ENCODE measurements at regions of chr14 and their contacts with region 1.

Region 1: DNA sequence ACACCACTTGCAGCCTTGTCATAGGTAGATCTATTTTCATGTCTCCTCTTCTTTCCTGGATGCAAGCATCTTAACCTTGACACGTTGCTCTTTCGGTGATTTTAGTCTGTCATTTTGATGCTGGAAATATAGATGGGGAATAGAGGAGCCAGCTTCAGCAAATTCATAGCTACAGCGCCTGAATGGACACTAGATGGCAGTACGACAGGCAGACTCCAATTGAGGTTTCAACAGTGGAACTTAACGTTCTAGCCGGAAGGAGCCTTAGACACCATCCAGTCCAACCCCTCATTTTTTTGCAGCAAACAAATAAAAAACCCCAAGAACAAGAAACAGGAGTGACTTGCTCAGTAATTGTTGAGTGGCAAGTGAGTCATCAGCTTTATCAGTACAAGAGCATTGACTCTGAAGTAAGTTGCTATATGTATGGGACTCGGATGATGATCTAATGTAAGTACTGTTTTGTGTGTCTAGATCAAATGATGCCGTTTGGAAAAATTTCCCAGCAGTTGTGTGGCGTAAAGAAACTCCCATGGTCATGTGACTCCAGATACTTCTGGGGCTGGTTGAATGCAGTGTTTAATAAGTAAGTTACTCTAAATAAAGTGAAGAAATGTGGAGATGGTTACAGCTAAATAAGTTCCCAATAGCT is 9.0 kb downstream of the DMAC2L start:
- DNase-seq: peak; percentile 83
- ATAC-seq: peak; percentile 98
- H3K4me3 ChIP-seq: peak overlapping the region; percentile 10 to 16
- H3K27ac ChIP-seq: peak overlapping the region; percentile 21; the same call in 1 of the 2 replicates
- H3K4me1 ChIP-seq: peaks cover 5 to 10% of the 10 kb centered on the region in 2 experiments
- H3K27me3 ChIP-seq: no peaks in the 10 kb centered on the region
- CTCF ChIP-seq: peak; percentile 83 to 96 (median 95)
- POLR2A ChIP-seq: no peak
- RAD21 ChIP-seq: peak; percentile 74

Region 2: DNA sequence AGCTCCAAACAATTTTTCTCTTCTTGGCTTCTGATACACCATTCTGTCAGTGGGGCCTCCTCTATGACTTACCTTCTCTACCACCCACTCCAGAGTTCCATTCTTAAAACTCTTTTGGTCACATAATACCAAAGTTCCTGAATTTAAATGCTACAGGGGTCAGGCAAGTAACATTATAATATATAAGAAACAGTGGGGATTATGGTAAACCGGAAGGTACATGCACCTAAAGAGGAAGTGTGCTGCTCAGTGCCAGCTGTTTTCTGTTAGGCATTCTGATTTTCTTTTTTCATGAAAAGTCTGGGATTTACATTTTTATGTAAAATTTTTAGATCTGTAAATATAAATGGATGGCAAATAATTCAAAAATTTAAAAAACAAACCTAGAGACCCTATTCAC is 129.6 kb before region 1 on chr14:
- CTCF ChIA-PET with region 1: no interaction called
- POLR2A ChIA-PET with region 1: no interaction called
- RAD21 ChIA-PET with region 1: no interaction called
- intact Hi-C with region 1: no loop called
- DNase-seq: no peak
- ATAC-seq: no peak
- H3K4me3 ChIP-seq: no peak overlapping the region
- H3K27ac ChIP-seq: no peak overlapping the region
- H3K4me1 ChIP-seq: no peaks in the 10 kb centered on the region
- H3K27me3 ChIP-seq: no peaks in the 10 kb centered on the region
- CTCF ChIP-seq: no peak
- POLR2A ChIP-seq: no peak
- RAD21 ChIP-seq: no peak

Region 3: GRCh38 chr14:50335389-50335788 is 14.3 kb after region 1 on chr14:
- CTCF ChIA-PET with region 1: interaction called, 18 read pairs
- POLR2A ChIA-PET with region 1: no interaction called
- RAD21 ChIA-PET with region 1: no interaction called
- intact Hi-C with region 1: no loop called
- DNase-seq: no peak
- ATAC-seq: peak; percentile 36; the same call in 1 of the 2 replicates
- H3K4me3 ChIP-seq: no peak overlapping the region
- H3K27ac ChIP-seq: no peak overlapping the region
- H3K4me1 ChIP-seq: no peaks in the 10 kb centered on the region
- H3K27me3 ChIP-seq: no peaks in the 10 kb centered on the region
- CTCF ChIP-seq: no peak
- POLR2A ChIP-seq: no peak
- RAD21 ChIP-seq: no peak

Region 4: GRCh38 chr14:50396631-50397390 is 75.7 kb after region 1 on chr14 and contains the start of gene CDKL1:
- CTCF ChIA-PET with region 1: interaction called, 4 read pairs
- POLR2A ChIA-PET with region 1: no interaction called
- RAD21 ChIA-PET with region 1: interaction called in 1 of 2 experiments, 4 read pairs
- intact Hi-C with region 1: loop called (anchors 5 kb)
- DNase-seq: no peak
- ATAC-seq: peak; percentile 84
- H3K4me3 ChIP-seq: peak within 1 kb of the TSS; percentile 54 to 67
- H3K27ac ChIP-seq: peak within 1 kb of the TSS; percentile 65
- H3K4me1 ChIP-seq: peaks cover 10 to 26% of the 10 kb centered on the region in 2 experiments
- H3K27me3 ChIP-seq: no peaks in the 10 kb centered on the region
- CTCF ChIP-seq: no peak
- POLR2A ChIP-seq: peak; percentile 33
- RAD21 ChIP-seq: no peak
- total RNA-seq, gene CDKL1: 7.1 TPM

Region 5: GRCh38 chr14:50532502-50533240 is 211.5 kb after region 1 on chr14 and contains the start of gene MAP4K5:
- CTCF ChIA-PET with region 1: interaction called, 9 read pairs
- POLR2A ChIA-PET with region 1: interaction called, 3 read pairs
- RAD21 ChIA-PET with region 1: interaction called, 3 to 4 read pairs
- intact Hi-C with region 1: loop called (anchors 1 kb)
- DNase-seq: peak; percentile 76
- ATAC-seq: peak; percentile 94
- H3K4me3 ChIP-seq: peak within 1 kb of the TSS; percentile 76 to 81
- H3K27ac ChIP-seq: peak within 1 kb of the TSS; percentile 88
- H3K4me1 ChIP-seq: peaks cover 9 to 27% of the 10 kb centered on the region in 2 experiments; a peak in 3 of 4 replicates
- H3K27me3 ChIP-seq: no peaks in the 10 kb centered on the region
- CTCF ChIP-seq: peak; percentile 79 to 89 (median 83)
- POLR2A ChIP-seq: peak; percentile 56
- RAD21 ChIP-seq: peak; percentile 97
- total RNA-seq, gene MAP4K5: 39.1 TPM

Region 6: DNA sequence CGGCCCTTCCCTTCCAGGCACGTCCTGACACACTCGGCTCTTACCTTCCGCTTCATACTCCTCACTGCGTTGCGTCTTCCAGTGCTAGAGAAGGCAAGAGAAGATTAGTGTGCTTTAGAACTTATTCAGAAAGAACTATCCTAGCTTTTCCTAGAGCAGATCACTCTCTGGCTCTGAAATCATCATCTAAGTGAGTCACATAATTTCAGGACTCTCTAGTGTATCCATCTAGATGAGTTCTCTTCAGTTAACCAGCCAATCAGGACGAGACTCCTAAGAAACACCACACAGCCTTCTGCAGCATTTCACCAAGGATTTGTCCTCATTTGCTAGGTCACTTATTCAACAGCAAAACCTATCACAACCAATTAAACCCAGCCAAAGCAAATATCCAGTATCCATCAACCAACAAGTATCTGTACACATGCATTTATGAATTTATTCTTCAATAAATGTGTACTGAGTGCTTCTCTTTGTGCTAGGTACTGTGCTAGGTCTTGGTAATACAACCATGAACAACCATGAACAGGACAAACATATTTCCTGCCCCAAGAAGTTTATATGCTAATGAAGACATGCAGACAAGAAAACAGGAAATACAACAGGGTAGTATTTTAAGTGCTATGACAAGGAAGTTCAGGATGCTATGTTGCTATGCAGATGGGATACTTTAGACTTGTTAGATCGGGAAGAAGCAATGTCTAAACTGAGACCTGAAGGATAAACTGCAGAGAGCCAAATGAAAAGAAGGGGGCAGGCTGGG is 457.8 kb after region 1 on chr14:
- CTCF ChIA-PET with region 1: interaction called, 12 read pairs
- POLR2A ChIA-PET with region 1: no interaction called
- RAD21 ChIA-PET with region 1: interaction called in 1 of 2 experiments, 3 read pairs
- intact Hi-C with region 1: loop called (anchors 1 kb)
- DNase-seq: no peak
- ATAC-seq: no peak
- H3K4me3 ChIP-seq: no peak overlapping the region
- H3K27ac ChIP-seq: no peak overlapping the region
- H3K4me1 ChIP-seq: peaks cover 3 to 12% of the 10 kb centered on the region in 2 experiments; a peak in 3 of 4 replicates
- H3K27me3 ChIP-seq: no peaks in the 10 kb centered on the region
- CTCF ChIP-seq: no peak
- POLR2A ChIP-seq: no peak
- RAD21 ChIP-seq: no peak